Activated CD8-positive, alpha-beta T cell treated with anti-CD3 and anti-CD28 coated beads, Interleukin-2, amount 10 ng/mL, durations not matched to agents 7 days and 5 days (primary cell): ENCODE measurements at regions of chr22 and their contacts with region 1.

Region 1: DNA sequence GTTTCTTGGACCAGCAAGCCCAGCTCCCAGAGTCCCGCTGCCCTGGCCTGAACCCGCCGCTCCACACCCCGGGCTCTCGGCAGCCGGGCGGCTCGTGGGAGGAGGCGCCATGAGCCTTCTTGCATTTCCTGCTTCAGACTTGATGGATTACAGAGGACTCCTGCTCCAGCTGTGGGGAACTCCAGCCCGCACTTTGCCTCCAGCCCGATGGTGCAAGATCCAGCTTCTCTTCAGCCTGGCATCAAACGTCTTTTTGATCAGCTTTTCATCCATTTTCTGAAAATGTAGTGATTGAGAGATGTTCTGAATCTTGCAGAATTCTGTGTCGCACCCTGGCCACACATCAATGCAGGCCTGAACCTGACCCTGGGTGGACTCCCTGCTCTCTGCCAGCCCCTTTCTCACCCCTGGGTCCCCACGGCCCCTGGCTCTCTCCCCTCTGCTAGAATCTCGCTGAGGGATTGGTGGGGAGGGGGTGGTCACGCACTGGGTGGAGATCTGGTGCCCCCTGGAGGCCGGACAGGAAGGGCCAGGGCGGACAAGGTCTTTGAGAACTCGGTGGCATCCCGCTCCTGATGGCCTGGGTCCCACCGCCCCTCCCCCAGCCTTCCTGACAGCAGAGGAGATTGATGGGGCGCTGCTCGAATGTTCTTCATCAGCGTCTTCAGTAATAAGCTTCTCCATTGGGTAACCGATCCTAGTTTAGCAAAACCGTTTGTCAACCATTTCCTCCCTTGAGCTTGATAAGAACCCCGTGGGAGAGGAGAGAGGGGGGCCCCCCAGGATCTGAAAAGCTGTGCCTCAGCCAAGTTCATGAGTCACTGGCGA is 12.1 kb upstream of the NFAM1 start:
- DNase-seq: peak; percentile 86
- ATAC-seq: peak; percentile 82
- H3K4me3 Mint-ChIP-seq: peak overlapping the region; percentile 58
- H3K27ac Mint-ChIP-seq: peak overlapping the region; percentile 79
- H3K4me1 Mint-ChIP-seq: peaks cover 31% of the 10 kb centered on the region
- H3K27me3 Mint-ChIP-seq: no peaks in the 10 kb centered on the region

Region 2: DNA sequence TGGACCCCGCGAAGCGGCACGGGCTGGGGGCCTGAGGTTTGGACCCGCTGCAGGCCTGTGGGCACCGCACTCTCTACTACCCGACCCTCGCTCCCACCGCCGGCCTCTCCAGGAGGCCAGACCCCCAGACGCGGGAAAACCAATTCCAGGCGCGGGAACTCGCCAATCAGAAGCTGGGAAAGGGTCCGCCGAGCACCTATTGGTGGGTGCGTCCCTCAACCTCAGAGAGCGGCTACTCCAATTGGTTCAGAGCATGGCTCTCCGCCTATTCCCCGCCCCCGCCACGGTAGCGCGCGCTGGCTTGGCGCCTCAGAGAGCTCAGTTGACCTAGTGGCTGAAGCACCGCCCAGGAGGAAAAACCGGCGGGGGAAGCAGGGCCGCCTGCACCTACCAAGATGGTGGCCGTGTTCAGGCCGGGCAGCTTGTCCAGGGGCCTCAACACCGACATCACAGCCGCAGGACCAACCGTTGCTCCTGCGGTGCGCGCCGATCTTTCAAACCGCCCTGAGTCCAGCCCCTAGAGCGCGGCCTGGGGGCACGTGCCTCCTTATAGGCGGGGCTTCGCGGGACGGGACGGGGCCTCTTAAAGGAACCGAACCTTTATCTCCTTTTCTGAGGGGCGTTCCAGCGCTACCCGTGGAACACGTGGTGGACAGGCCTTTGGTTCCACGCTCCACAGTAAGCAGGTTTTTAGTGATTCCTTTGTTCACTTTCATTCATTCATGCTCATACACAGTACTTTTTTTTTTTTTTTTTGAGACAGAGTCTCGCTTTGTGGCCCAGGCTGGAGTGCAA is 497.5 kb before region 1 on chr22 and contains the start of gene CENPM:
- CTCF ChIA-PET with region 1: interaction called, 13 read pairs
- POLR2A ChIA-PET with region 1: no interaction called
- DNase-seq: peak; percentile 96
- ATAC-seq: peak; percentile 98
- H3K4me3 Mint-ChIP-seq: peak within 1 kb of the TSS; percentile 81
- H3K27ac Mint-ChIP-seq: peak within 1 kb of the TSS; percentile 95
- H3K4me1 Mint-ChIP-seq: peaks cover 41% of the 10 kb centered on the region
- H3K27me3 Mint-ChIP-seq: no peaks in the 10 kb centered on the region
- total RNA-seq, gene CENPM: 83.6 to 83.8 TPM

Region 3: DNA sequence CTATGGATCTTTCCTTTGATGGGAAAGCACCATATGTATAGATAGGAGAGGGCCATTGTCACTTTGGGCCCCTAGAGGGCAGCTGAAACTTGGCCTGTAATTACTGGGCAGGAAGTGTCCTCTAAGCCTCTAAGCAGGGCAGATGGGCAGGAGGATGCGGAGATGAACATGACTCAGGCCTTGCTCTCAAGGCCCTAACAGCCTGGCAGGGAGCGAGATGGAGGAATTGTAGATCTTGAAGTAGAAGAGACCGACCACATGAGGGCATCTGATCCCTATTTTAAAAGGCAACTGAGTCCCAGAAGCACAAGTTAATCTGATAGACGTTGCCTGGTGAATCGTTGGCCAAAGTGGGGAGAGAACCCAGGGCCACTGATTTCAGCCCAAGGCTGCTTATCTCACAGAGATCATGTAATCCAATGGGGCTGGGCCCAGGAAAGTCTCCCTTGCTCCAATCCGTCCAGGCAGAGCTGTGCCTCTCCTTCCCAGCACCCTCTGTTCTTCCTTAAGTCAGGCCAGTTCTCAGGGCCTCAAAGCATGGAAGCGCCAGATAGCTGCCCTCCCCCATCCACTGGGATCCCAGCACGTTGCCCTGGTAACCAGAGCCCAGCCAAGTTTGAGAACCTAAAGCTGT is 477.6 kb before region 1 on chr22:
- CTCF ChIA-PET with region 1: interaction called, 31 read pairs
- POLR2A ChIA-PET with region 1: no interaction called
- DNase-seq: peak; percentile 57
- ATAC-seq: peak; percentile 62
- H3K4me3 Mint-ChIP-seq: no peak overlapping the region
- H3K27ac Mint-ChIP-seq: no peak overlapping the region
- H3K4me1 Mint-ChIP-seq: no peaks in the 10 kb centered on the region
- H3K27me3 Mint-ChIP-seq: peaks cover 2% of the 10 kb centered on the region

Region 4: GRCh38 chr22:42116848-42117424 is 327.4 kb before region 1 on chr22:
- CTCF ChIA-PET with region 1: interaction called, 11 read pairs
- POLR2A ChIA-PET with region 1: no interaction called
- DNase-seq: no peak
- ATAC-seq: no peak
- H3K4me3 Mint-ChIP-seq: no peak overlapping the region
- H3K27ac Mint-ChIP-seq: no peak overlapping the region
- H3K4me1 Mint-ChIP-seq: peaks cover 35% of the 10 kb centered on the region
- H3K27me3 Mint-ChIP-seq: no peaks in the 10 kb centered on the region

Region 5: GRCh38 chr22:42169055-42169469 is 275.2 kb before region 1 on chr22:
- CTCF ChIA-PET with region 1: interaction called, 67 read pairs
- POLR2A ChIA-PET with region 1: no interaction called
- DNase-seq: peak; percentile 85
- ATAC-seq: peak; percentile 90
- H3K4me3 Mint-ChIP-seq: no peak overlapping the region
- H3K27ac Mint-ChIP-seq: peak overlapping the region; percentile 50
- H3K4me1 Mint-ChIP-seq: peaks cover 15% of the 10 kb centered on the region
- H3K27me3 Mint-ChIP-seq: no peaks in the 10 kb centered on the region

Region 6: DNA sequence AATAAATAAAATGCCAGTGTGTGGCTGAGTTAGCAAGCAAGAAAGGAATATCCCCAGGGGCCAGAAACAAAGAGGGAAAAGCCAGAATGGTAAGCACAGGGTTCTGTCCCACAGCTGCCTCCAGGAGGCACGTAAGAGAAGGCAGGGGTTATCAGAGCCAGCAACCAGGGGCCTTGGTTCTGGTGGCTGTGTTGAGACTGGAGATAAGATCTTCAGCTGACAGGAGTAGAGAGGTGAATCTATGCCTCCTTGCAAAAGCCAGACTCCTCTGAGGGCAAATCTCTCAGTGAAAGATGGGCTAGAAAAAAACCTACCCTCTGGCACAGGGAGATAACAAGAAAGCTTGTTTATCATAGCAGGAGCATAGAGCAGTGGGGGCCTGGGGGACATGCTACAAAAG is 17.7 kb after region 1 on chr22:
- CTCF ChIA-PET with region 1: interaction called, 24 read pairs
- POLR2A ChIA-PET with region 1: no interaction called
- DNase-seq: no peak
- ATAC-seq: no peak
- H3K4me3 Mint-ChIP-seq: no peak overlapping the region
- H3K27ac Mint-ChIP-seq: no peak overlapping the region
- H3K4me1 Mint-ChIP-seq: no peaks in the 10 kb centered on the region
- H3K27me3 Mint-ChIP-seq: peaks cover 21% of the 10 kb centered on the region